T-cell (primary cell): ENCODE measurements at regions of chr12 and their contacts with region 1.

Region 1: GRCh38 chr12:39587225-39587624 is 32.4 kb downstream of the ABCD2 start:
- DNase-seq: peak in 19 of 35 experiments; percentile 1 to 64 (median 11)
- ATAC-seq: peak; percentile 57 to 77 (median 75)
- H3K4me3 ChIP-seq: no peak overlapping the region
- H3K4me3 Mint-ChIP-seq: no peak overlapping the region
- H3K27ac ChIP-seq: no peak overlapping the region
- H3K27ac Mint-ChIP-seq: peak overlapping the region in 1 of 2 donors; percentile 41
- H3K4me1 ChIP-seq: no peaks in the 10 kb centered on the region
- H3K4me1 Mint-ChIP-seq: peaks cover 6 to 14% (median 12%) of the 10 kb centered on the region in 3 donors
- H3K27me3 ChIP-seq: no peaks in the 10 kb centered on the region
- H3K27me3 Mint-ChIP-seq: no peaks in the 10 kb centered on the region

Region 2: GRCh38 chr12:39553471-39553870 is 33.8 kb before region 1 on chr12:
- CTCF ChIA-PET with region 1: no interaction called
- POLR2A ChIA-PET with region 1: no interaction called
- DNase-seq: no peak
- ATAC-seq: no peak
- H3K4me3 ChIP-seq: no peak overlapping the region
- H3K4me3 Mint-ChIP-seq: no peak overlapping the region
- H3K27ac ChIP-seq: no peak overlapping the region
- H3K27ac Mint-ChIP-seq: no peak overlapping the region
- H3K4me1 ChIP-seq: no peaks in the 10 kb centered on the region
- H3K4me1 Mint-ChIP-seq: no peaks in the 10 kb centered on the region
- H3K27me3 ChIP-seq: no peaks in the 10 kb centered on the region
- H3K27me3 Mint-ChIP-seq: no peaks in the 10 kb centered on the region

Region 3: DNA sequence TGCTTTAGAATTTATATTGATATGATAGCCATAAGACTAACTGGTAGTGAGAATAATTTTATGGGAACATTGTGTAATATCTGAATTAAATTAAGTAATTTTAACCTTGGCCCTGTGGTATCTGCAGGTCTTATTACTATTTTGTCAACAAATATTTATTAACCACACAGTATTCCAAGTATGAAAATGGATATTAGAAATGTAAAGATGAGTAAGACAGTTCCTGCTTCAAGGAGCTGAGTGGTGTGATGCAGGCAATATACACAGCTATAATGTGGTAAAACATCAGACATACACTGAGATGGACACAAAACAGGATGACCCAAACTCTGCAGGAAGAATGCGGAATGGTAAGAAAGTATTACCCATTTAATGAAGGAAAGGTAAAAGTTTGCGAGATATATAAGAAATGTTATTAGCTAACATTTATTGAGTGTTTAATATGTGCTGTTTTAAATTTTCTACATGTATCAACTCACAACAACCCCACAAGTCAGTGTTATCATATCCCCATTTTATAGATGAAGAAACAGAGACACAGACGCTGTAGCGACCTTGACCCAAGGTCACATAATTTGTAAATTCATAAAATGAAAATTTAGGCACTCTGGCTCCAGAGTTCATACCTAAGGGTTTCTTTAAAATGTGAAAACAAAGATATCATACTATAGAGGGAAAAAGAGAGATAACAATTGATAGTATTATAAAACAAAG is 19.6 kb after region 1 on chr12:
- CTCF ChIA-PET with region 1: no interaction called
- POLR2A ChIA-PET with region 1: interaction called in 1 of 2 experiments, 11 read pairs
- DNase-seq: no peak
- ATAC-seq: no peak
- H3K4me3 ChIP-seq: no peak overlapping the region
- H3K4me3 Mint-ChIP-seq: no peak overlapping the region
- H3K27ac ChIP-seq: no peak overlapping the region
- H3K27ac Mint-ChIP-seq: peak overlapping the region; percentile 8 to 23
- H3K4me1 ChIP-seq: no peaks in the 10 kb centered on the region
- H3K4me1 Mint-ChIP-seq: peaks cover 45 to 50% (median 48%) of the 10 kb centered on the region in 3 donors
- H3K27me3 ChIP-seq: no peaks in the 10 kb centered on the region
- H3K27me3 Mint-ChIP-seq: no peaks in the 10 kb centered on the region

Region 4: GRCh38 chr12:39619660-39620433 is 32.6 kb after region 1 on chr12 and contains the start of gene ABCD2:
- CTCF ChIA-PET with region 1: interaction called, 4 to 13 read pairs
- POLR2A ChIA-PET with region 1: no interaction called
- DNase-seq: peak; percentile 46 to 93 (median 70)
- ATAC-seq: peak; percentile 81 to 86 (median 84)
- H3K4me3 ChIP-seq: peak within 1 kb of the TSS; percentile 67 to 74
- H3K4me3 Mint-ChIP-seq: no peak within 1 kb of the TSS
- H3K27ac ChIP-seq: peak within 1 kb of the TSS; percentile 92
- H3K27ac Mint-ChIP-seq: no peak within 1 kb of the TSS
- H3K4me1 ChIP-seq: peaks cover 21 to 46% of the 10 kb centered on the region in 2 experiments
- H3K4me1 Mint-ChIP-seq: peaks cover 36 to 49% (median 44%) of the 10 kb centered on the region in 3 donors
- H3K27me3 ChIP-seq: no peaks in the 10 kb centered on the region
- H3K27me3 Mint-ChIP-seq: no peaks in the 10 kb centered on the region
- total RNA-seq, gene ABCD2: 10.9 to 16.8 (median 14.7) TPM

Region 5: DNA sequence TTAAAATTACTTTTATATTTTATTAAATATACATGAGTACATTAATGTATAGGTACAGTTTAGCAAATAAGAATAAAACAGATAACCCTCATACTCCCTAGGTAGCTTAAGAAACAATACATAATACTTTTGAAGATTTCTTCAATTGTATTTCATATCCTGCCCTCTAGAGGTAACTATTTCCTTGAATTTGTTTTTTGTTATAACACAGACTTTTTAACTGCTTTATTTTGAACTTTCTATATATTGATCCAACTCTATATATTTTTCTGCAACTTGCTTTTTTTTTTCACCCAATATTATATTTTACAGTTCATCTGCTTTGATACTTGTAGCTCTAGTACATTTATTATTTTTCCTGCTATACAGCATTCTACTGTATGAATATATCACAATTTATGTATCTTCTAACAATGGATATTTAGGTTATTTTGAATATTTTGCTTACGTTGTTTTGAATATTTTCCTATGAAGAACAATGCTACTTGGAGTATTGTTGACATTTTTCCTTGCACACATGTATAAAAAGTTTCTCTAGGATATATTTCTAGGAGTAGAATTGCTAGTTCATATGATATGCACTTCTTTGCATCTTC is 105.1 kb after region 1 on chr12:
- CTCF ChIA-PET with region 1: interaction called, 3 to 10 read pairs
- POLR2A ChIA-PET with region 1: no interaction called
- DNase-seq: peak in 1 of 35 experiments; percentile 41
- ATAC-seq: peak in 3 of 4 experiments; percentile 37 to 55 (median 48)
- H3K4me3 ChIP-seq: no peak overlapping the region
- H3K4me3 Mint-ChIP-seq: no peak overlapping the region
- H3K27ac ChIP-seq: no peak overlapping the region
- H3K27ac Mint-ChIP-seq: no peak overlapping the region
- H3K4me1 ChIP-seq: no peaks in the 10 kb centered on the region
- H3K4me1 Mint-ChIP-seq: peaks cover 0 to 9% (median 8%) of the 10 kb centered on the region in 3 donors
- H3K27me3 ChIP-seq: no peaks in the 10 kb centered on the region
- H3K27me3 Mint-ChIP-seq: no peaks in the 10 kb centered on the region

Region 6: DNA sequence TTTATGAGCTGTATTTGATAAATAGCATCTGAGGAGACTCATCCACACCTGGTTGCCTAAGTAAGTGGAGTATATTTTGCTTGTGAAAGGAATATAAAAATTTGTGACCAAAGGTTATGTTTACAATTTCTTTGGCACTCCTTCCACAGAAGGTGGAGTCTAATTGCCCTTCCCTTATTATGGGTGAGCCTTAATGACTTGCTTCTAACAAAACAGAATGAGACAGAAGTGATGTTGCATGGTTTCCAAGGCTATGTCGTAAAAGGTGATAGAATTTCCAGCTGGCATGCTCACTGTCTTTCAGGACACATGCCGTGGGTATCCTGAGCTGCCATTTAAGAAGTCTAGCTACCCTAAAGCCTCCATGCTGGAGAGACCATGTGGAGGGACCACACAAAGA is 149.2 kb after region 1 on chr12:
- CTCF ChIA-PET with region 1: no interaction called
- POLR2A ChIA-PET with region 1: interaction called in 1 of 2 experiments, 13 read pairs
- DNase-seq: no peak
- ATAC-seq: no peak
- H3K4me3 ChIP-seq: no peak overlapping the region
- H3K4me3 Mint-ChIP-seq: no peak overlapping the region
- H3K27ac ChIP-seq: no peak overlapping the region
- H3K27ac Mint-ChIP-seq: no peak overlapping the region
- H3K4me1 ChIP-seq: no peaks in the 10 kb centered on the region
- H3K4me1 Mint-ChIP-seq: no peaks in the 10 kb centered on the region
- H3K27me3 ChIP-seq: peaks cover 0 to 8% of the 10 kb centered on the region in 2 experiments
- H3K27me3 Mint-ChIP-seq: no peaks in the 10 kb centered on the region

Region 7: GRCh38 chr12:40107098-40107802 is 520.0 kb after region 1 on chr12:
- CTCF ChIA-PET with region 1: interaction called, 3 to 10 read pairs
- POLR2A ChIA-PET with region 1: no interaction called
- DNase-seq: peak; percentile 58 to 93 (median 83)
- ATAC-seq: peak; percentile 24 to 40 (median 28)
- H3K4me3 ChIP-seq: peak overlapping the region; percentile 38 to 49
- H3K4me3 Mint-ChIP-seq: peak overlapping the region; percentile 82 to 87 (median 82)
- H3K27ac ChIP-seq: peak overlapping the region; percentile 38
- H3K27ac Mint-ChIP-seq: peak overlapping the region; percentile 82 to 89
- H3K4me1 ChIP-seq: peaks cover 9 to 20% of the 10 kb centered on the region in 2 experiments
- H3K4me1 Mint-ChIP-seq: peaks cover 31 to 36% (median 34%) of the 10 kb centered on the region in 3 donors
- H3K27me3 ChIP-seq: peaks cover 2 to 4% of the 10 kb centered on the region in 2 experiments
- H3K27me3 Mint-ChIP-seq: peaks cover 5 to 6% of the 10 kb centered on the region in 2 donors